ENCODE measurements at regions of chr1 and their contacts with region 1.

Region 1: GRCh38 chr1:109579491-109579890 is 31.1 kb downstream of the GNAI3 start:
- DNase-seq: no peak
- H3K4me3 ChIP-seq: no peak overlapping the region
- H3K27ac ChIP-seq: no peak overlapping the region
- H3K4me1 ChIP-seq: peaks cover 20% of the 10 kb centered on the region
- H3K27me3 ChIP-seq: no peaks in the 10 kb centered on the region
- CTCF ChIP-seq: no peak
- POLR2A ChIP-seq: no peak

Region 2: DNA sequence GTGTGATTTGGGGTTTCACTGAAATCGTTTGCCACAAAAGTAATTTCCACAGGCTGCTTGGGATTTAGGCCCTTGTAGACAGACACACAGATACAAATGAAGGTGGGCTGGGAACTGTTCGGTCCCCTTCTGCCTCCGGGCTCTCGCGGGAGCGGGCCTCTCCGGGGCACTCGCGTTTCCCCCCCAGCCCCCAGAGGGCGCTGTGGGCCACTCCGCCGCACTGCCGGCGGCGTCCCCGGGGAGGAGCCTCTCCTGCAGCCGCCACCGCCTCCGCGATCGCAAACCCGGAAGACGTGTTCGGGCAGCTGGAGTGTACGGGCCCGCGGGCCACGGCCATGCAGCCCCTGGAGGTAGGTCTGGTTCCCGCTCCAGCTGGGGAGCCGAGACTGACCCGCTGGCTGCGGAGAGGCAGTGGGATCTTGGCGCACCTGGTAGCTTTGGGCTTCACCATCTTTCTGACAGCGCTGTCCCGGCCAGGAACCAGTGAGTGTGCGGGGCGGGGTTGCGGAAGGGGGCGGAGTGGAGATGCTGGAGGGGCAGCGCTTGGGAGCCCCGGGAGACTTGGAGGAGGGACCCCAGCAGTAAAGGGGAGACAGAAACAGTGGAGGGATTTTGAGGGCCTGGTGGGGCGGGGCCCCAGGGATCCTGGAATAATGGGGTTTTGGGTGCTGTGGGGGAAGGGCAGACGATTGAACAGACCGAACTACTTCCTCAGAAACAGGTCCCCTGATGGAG is 85.5 kb before region 1 on chr1 and contains the start of gene CYB561D1:
- CTCF ChIA-PET with region 1: no interaction called
- POLR2A ChIA-PET with region 1: no interaction called
- dilution Hi-C with region 1: no loop called
- intact Hi-C with region 1: no loop called
- DNase-seq: peak; percentile 91
- H3K4me3 ChIP-seq: peak within 1 kb of the TSS; percentile 79 to 94 (median 80)
- H3K27ac ChIP-seq: peak within 1 kb of the TSS; percentile 42
- H3K4me1 ChIP-seq: peaks cover 18% of the 10 kb centered on the region
- H3K27me3 ChIP-seq: no peaks in the 10 kb centered on the region
- CTCF ChIP-seq: peak; percentile 98 to 99
- POLR2A ChIP-seq: peak; percentile 76
- total RNA-seq, gene CYB561D1: 6.9 and 7.3 TPM in 2 replicates

Region 3: GRCh38 chr1:109598655-109599054 is 19.2 kb after region 1 on chr1:
- CTCF ChIA-PET with region 1: interaction called, 6 read pairs
- POLR2A ChIA-PET with region 1: interaction called, 10 read pairs
- dilution Hi-C with region 1: no loop called
- intact Hi-C with region 1: loop called (anchors 2 kb)
- DNase-seq: no peak
- H3K4me3 ChIP-seq: no peak overlapping the region
- H3K27ac ChIP-seq: no peak overlapping the region
- H3K4me1 ChIP-seq: peaks cover 15% of the 10 kb centered on the region
- H3K27me3 ChIP-seq: no peaks in the 10 kb centered on the region
- CTCF ChIP-seq: peak in 1 of 2 donors; percentile 20
- POLR2A ChIP-seq: no peak